ENCODE measurements at regions of chr2 and their contacts with region 1.

Region 1: DNA sequence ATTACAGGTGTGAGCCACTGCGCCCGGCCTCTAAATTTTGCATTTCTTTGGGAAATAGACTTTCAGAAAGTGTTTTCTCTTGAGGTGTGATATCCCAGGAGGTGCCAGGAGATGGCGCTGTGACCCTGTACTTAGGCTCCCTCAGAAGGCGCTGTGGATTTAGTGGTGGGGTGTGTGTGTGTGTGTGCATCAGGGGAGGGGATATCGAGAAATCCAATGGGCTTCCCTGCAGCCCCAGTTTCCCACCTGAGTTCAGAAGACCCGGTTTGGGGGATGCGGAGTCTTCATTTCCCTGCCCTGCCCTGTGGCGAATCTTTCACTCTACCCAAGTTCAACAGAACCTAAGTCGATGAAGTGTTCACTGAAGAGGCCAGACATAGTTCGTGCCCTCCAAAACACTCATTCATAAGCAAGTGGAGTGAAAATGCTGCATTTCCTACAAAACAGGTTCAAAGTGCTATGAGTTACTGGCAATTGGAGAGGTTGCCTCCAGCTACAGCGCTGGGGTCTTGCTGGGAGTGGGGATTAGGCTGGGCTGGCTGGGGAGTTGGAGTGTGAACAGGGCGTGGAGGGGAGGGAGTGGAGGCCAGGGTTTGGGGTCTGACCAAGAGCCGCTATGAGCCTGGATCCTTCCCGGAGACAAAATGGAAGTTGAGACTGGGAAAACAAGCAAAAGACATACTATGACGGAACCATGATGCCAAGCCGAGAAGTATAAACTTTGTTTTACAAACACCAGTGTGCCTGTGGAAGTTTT is 6.5 kb upstream of the WNT6 start:
- DNase-seq: no peak
- H3K4me3 ChIP-seq: no peak overlapping the region
- H3K27me3 ChIP-seq: peaks cover 39% of the 10 kb centered on the region
- CTCF ChIP-seq: peak; percentile 78

Region 2: GRCh38 chr2:218659258-218659987 is 193.7 kb before region 1 on chr2 and contains the starts of genes BCS1L and ZNF142:
- CTCF ChIA-PET with region 1: interaction called, 33 read pairs
- POLR2A ChIA-PET with region 1: no interaction called
- DNase-seq: peak; percentile 45
- H3K4me3 ChIP-seq: peak within 1 kb of the TSS; percentile 89
- H3K27me3 ChIP-seq: no peaks in the 10 kb centered on the region
- CTCF ChIP-seq: no peak
- polyA plus RNA-seq, gene BCS1L: 34.1 and 49.0 TPM in 2 replicates
- polyA plus RNA-seq, gene ZNF142: 2.9 and 7.1 TPM in 2 replicates

Region 3: DNA sequence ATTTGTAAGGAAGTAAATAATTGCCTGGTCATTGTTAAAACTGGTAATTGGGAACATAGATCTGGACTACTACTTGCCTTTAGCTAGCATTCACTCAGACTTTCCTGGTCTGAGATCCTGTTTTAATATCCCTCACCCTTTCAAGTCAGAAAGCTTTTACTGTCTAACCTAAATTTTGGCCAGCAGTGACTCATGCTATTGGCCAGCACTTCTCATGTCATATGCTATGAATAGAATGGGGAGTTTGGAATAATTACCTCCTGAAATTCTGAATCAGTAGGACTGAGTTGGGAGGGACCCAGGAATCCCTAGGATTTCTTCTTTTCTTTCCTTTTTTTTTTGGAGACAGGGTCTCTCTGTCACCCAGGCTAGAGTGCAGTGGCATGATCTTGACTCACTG is 161.9 kb before region 1 on chr2:
- CTCF ChIA-PET with region 1: interaction called, 51 read pairs
- POLR2A ChIA-PET with region 1: no interaction called
- DNase-seq: no peak
- H3K4me3 ChIP-seq: no peak overlapping the region
- H3K27me3 ChIP-seq: no peaks in the 10 kb centered on the region
- CTCF ChIP-seq: no peak

Region 4: DNA sequence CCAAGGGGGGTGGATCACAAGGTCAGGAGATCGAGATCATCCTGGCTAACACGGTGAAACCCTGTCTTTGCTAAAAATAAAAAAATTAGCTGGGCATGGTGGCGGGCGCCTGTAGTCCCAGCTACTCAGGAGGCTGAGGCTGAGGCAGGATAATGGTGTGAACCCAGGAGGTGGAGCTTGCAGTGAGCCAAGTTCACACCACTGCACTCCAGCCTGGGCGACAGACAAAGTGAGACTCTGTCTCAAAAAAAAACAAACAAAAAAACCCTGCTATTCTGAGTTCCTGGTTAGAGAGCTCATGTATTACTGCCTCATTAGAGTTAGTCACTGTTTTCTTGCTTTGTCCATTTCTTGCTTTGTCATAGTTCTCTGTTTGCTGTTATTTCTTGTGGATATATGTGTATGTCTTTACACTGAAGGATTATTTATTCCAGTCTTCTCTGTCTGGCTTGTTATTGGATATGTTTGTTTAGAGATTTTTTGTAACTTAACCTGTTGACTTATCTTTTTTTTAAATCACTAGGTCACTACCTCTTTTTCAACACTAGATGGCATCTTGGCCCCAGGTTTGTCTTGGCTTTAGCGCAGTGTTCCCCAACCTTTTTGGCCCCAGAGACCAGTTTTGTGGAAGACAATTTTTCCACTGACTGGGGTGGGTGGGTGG is 125.5 kb before region 1 on chr2:
- CTCF ChIA-PET with region 1: interaction called, 39 read pairs
- POLR2A ChIA-PET with region 1: no interaction called
- DNase-seq: no peak
- H3K4me3 ChIP-seq: no peak overlapping the region
- H3K27me3 ChIP-seq: no peaks in the 10 kb centered on the region
- CTCF ChIP-seq: peak; percentile 31

Region 5: GRCh38 chr2:218839430-218839829 is 13.7 kb before region 1 on chr2:
- CTCF ChIA-PET with region 1: interaction called, 11 read pairs
- POLR2A ChIA-PET with region 1: no interaction called
- DNase-seq: no peak
- H3K4me3 ChIP-seq: no peak overlapping the region
- H3K27me3 ChIP-seq: peaks cover 2% of the 10 kb centered on the region
- CTCF ChIP-seq: no peak

Region 6: DNA sequence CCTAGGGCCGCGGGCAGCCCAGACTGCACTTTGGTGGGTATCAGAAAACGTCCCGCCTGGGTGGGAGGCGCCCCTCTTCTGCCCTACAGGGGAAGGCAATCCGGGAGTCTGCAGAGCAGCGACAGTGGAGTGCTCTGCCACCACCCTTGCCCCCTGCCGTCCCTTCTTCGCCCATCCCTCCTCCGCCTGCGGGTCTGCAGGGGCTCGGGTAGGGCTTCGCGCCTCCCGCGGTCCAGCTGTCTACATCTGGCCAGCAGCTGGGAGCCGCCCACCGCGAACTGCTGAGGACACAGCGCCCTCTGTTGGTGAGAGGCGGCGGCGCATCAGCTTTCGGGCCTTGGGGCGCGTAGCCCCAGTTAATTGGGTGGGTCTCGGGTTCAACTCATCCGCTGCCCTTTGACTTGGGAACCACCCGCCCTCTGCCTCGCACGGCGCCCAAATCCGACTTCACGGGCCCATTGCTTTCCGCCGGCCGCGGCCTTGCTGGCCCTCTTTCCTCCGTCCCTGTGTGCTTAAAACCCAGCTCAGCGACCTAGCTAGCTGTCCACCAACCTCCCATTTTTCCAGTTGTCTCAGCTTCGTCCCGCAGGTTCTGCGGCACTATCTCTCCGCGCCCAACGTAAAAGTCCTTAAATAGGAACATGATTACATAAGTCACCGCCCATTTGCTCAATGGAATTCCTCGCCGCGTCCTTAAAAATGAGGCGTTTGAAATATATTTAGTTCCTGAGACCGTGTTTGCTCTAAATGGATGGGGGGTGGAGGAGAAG is 45.2 kb after region 1 on chr2:
- CTCF ChIA-PET with region 1: interaction called, 42 read pairs
- POLR2A ChIA-PET with region 1: no interaction called
- DNase-seq: no peak
- H3K4me3 ChIP-seq: no peak overlapping the region
- H3K27me3 ChIP-seq: peaks cover 35% of the 10 kb centered on the region
- CTCF ChIP-seq: peak; percentile 98

Region 7: GRCh38 chr2:218927422-218927821 is 74.3 kb after region 1 on chr2:
- CTCF ChIA-PET with region 1: no interaction called
- POLR2A ChIA-PET with region 1: no interaction called
- DNase-seq: no peak
- H3K4me3 ChIP-seq: no peak overlapping the region
- H3K27me3 ChIP-seq: peaks cover 7% of the 10 kb centered on the region
- CTCF ChIP-seq: no peak

Measured in BJ (cell line).